ENCODE measurements at regions of chr2 and their contacts with region 1.

Region 1: DNA sequence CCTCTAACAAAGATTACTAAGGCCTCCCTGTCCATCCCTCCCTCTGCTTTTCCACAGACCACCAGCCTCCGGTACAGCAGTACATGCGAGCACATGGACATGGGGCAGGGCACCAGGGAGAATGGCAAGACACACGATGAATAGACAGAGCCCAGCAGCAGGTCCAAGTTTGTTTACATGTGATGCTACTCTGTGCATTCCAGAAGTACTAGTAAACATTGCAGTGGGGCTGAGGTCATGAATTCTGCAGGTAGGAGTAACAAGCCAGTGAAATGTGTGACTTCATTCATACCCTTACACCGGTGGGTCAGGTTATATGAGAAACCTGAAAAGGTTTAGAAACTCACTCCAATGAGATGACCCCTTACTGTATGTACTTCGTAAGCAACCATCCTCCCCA is 205.7 kb downstream of the BCL11A start:
- DNase-seq: no peak
- H3K4me3 ChIP-seq: no peak overlapping the region
- CTCF ChIP-seq: no peak
- POLR2A ChIP-seq: no peak

Region 2: GRCh38 chr2:59378127-59378526 is 969.7 kb before region 1 on chr2:
- intact Hi-C with region 1: loop called (anchors 5 kb)
- DNase-seq: no peak
- H3K4me3 ChIP-seq: no peak overlapping the region
- CTCF ChIP-seq: no peak
- POLR2A ChIP-seq: no peak